Head of caudate nucleus (tissue), 42 donors: ENCODE measurements at regions of chr2 and their contacts with region 1.

Region 1: DNA sequence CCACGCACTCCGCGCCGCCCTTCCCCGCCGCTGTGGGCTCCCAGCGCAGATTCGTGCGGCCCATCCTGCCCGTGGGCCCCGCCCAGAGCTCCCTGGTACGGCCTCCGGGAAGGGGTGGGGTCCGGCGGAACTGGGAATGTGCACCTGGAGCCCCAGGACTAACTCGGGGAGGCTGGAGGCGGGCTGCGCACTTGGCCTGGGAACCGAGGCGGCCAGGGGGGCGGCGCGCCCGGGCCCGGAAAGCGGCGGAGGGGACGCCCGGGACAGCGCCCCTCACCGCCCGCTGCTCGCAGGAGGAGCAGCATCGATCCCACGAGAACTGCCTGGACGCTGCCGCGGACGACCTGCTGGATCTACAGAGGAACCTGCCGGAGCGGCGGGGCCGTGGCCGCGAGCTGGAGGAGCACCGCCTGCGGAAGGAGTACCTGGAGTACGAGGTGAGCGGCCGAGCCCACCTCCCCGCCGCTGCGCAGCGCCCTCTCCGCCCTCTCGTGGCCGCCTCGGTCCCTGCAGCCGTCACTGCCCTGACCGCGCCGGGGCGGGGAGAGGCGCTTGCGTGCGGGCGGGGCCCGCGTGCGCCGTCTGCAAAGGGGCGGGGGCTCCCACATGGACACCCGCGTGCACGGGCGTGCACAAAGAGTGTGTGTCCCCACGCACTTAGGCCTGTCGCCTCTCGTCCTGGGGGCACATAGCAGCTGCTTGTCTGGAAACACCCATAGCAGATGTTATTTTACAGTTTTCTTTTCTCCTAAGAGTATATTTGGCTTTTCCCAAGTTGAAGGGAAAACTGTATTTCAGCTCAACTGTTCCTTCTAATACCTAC is 25.2 kb downstream of the PSD4 start:
- DNase-seq: peak; percentile 43 to 93 (median 82)

Region 2: GRCh38 chr2:113138428-113139322 is 60.3 kb before region 1 on chr2:
- intact Hi-C with region 1: loop called (anchors 5 kb)
- DNase-seq: peak in 18 of 42 donors; percentile 8 to 75 (median 45)

Region 3: GRCh38 chr2:113284481-113284880 is 85.5 kb after region 1 on chr2:
- intact Hi-C with region 1: no loop called
- DNase-seq: no peak